AG04449 (cell line): ENCODE measurements at regions of chr1 and their contacts with region 1.

Region 1: GRCh38 chr1:224513787-224514209 is 79.2 kb upstream of the WDR26 start:
- DNase-seq: no peak
- H3K4me3 ChIP-seq: no peak overlapping the region
- CTCF ChIP-seq: peak; percentile 97

Region 2: GRCh38 chr1:224068458-224069072 is 445.2 kb before region 1 on chr1:
- CTCF ChIA-PET with region 1: no interaction called
- POLR2A ChIA-PET with region 1: no interaction called
- DNase-seq: no peak
- H3K4me3 ChIP-seq: no peak overlapping the region
- CTCF ChIP-seq: no peak

Region 3: DNA sequence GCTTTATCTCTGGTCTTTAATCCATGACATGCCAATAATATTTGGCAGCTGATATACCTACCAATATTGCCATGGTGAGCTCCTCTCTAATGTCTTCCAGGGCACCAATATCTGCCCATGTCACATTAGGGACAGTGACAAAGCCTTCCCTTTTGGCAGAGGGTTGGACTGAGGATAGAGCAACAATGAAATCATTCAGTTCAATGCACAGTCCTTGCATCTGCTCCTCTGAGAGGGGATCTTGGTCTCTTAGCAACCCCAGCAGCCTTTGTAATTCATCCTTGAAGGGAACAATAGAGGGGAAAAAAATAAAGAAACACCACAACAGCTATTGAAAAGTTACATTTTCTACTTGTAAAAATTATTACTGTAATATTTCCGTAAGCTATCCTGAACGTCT is 226.1 kb before region 1 on chr1:
- CTCF ChIA-PET with region 1: no interaction called
- POLR2A ChIA-PET with region 1: no interaction called
- DNase-seq: no peak
- H3K4me3 ChIP-seq: no peak overlapping the region
- CTCF ChIP-seq: no peak

Region 4: DNA sequence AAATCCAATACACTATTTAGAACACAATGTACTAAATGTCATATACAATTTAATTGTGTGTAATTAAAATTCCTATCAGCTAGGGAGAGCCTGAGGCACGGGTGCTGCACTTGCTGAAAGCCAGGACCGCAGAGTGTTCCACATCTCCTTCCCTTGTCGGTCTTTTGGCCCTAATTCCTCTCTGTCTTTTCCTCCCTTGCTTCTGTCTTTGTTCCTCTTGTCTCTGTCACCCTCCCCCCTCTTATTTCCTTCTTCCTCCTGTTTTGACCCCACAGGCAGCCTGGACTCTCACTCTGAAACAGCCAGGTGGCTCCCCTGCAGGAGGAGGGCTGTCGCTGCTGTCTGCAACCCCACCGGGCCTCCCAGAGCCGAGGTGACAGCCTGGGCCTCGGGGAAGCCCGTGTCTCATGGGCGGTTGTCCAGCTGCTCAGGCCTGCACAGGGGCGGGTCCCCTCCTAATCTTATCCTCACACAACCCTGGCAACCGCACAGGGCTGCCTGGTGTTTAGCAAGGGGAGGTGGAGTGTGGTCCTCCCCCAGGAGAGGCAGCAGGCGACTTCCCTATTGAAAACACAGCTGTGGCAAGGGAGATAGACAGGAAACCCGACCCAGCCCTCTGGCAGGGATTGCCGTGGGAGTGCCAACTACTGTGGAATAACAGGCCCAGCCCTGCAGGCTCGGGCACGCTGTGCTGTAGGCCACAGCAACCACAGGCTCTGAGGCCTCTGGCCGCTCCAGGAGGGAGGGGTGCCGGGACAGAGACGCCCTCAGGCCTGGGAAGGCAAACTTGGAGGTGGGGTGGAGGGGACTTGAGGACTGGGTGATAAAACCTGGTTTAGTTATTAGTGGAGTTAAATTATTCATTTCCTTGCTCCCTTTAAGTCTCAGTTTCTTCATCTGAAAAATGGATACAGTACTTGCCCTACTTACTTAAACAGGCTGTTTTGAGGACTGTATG is 10.4 kb before region 1 on chr1:
- CTCF ChIA-PET with region 1: interaction called, 49 read pairs
- POLR2A ChIA-PET with region 1: interaction called, 3 read pairs
- DNase-seq: no peak
- H3K4me3 ChIP-seq: no peak overlapping the region
- CTCF ChIP-seq: no peak

Region 5: GRCh38 chr1:224615861-224616755 is 102.3 kb after region 1 on chr1 and contains the start of gene CNIH3:
- CTCF ChIA-PET with region 1: interaction called, 13 read pairs
- POLR2A ChIA-PET with region 1: no interaction called
- DNase-seq: no peak
- H3K4me3 ChIP-seq: peak within 1 kb of the TSS; percentile 55
- CTCF ChIP-seq: no peak

Region 6: GRCh38 chr1:224675590-224675989 is 161.8 kb after region 1 on chr1:
- CTCF ChIA-PET with region 1: interaction called, 14 read pairs
- POLR2A ChIA-PET with region 1: no interaction called
- DNase-seq: no peak
- H3K4me3 ChIP-seq: no peak overlapping the region
- CTCF ChIP-seq: no peak

Region 7: GRCh38 chr1:224873434-224874369 is 359.9 kb after region 1 on chr1:
- CTCF ChIA-PET with region 1: interaction called, 17 read pairs
- POLR2A ChIA-PET with region 1: no interaction called
- DNase-seq: no peak
- H3K4me3 ChIP-seq: no peak overlapping the region
- CTCF ChIP-seq: no peak

Region 8: GRCh38 chr1:224914292-224914900 is 400.6 kb after region 1 on chr1:
- CTCF ChIA-PET with region 1: interaction called, 13 read pairs
- POLR2A ChIA-PET with region 1: no interaction called
- DNase-seq: no peak
- H3K4me3 ChIP-seq: no peak overlapping the region
- CTCF ChIP-seq: no peak